Ascending aorta (tissue), 2 donors: ENCODE measurements at regions of chr17 and their contacts with region 1.

Region 1: DNA sequence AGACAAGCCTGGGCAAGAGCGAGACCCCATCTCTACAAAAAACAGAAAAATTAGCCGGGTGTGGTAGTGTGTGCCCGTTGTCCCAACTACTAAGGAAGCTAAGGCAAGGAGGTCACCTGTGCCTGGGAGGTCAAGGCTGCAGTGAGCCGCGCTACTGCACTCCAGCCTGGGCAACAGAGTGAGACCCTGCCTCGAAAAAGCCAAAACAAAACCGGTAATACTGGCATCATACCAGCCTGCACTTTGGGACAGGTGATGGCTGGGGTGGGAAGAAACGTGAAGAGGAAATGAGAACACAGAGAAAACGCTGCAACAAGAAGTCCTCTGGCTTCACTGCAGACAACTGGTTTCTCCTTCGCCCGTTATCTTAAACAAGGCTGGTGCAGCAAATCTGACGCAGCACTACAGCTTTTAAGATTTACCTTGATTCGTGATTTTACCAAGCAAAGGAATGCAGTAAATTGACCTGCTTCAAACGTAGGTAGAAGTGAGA is 725 bp upstream of the CASC3 start:
- DNase-seq: no peak
- H3K4me3 ChIP-seq: peak overlapping the region; percentile 82 to 97
- H3K27ac ChIP-seq: peak overlapping the region; percentile 91 to 99
- H3K4me1 ChIP-seq: peaks cover 14 to 15% of the 10 kb centered on the region in 2 donors
- H3K27me3 ChIP-seq: no peaks in the 10 kb centered on the region
- CTCF ChIP-seq: no peak

Region 2: DNA sequence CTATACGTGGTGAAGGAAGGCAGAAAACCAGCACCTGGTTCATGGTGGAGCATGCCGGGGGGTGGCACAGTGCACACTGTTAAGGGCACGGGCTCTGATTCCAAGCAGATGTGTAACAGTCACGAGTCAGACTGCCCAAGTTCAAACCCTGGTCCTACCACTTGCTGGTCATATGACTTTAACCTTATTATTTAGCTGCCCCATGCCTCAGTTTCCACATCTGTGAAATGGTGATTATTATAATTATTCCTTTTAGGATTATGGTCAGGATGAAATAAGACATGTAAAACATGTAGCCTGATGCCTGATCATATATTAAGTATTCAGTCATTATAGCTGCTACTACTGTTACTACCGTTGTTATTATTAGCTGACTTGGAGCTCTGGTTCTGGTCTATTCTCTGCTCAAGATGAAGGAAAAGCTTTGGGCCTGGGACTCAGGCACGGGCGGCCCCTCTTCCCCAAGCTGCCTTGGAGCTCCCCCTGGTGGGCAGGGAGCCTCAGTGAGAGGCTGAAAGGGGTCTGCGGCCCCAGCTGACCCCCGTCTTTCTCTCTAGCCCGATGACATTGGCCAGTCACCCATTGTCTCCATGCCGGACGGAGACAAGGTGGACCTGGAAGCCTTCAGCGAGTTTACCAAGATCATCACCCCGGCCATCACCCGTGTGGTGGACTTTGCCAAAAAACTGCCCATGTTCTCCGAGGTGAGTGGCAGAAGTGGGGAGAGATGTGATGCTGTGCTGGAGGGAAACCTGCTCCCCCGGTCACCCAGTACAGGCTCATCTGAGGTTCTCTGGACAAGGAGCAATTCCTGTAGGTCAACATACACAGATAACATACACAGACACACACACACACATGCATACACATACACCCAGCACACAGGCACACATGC is 53.2 kb before region 1 on chr17:
- intact Hi-C with region 1: no loop called
- DNase-seq: no peak
- H3K4me3 ChIP-seq: no peak overlapping the region
- H3K27ac ChIP-seq: peak overlapping the region; percentile 26 to 38
- H3K4me1 ChIP-seq: peaks cover 0 to 16% of the 10 kb centered on the region in 2 donors
- H3K27me3 ChIP-seq: no peaks in the 10 kb centered on the region
- CTCF ChIP-seq: peak; percentile 81 to 86 (median 82)

Region 3: GRCh38 chr17:40098846-40099618 is 40.6 kb before region 1 on chr17:
- intact Hi-C with region 1: loop called (anchors 1 kb)
- DNase-seq: peak; percentile 99 to 100
- H3K4me3 ChIP-seq: peak overlapping the region; percentile 89 to 94
- H3K27ac ChIP-seq: peak overlapping the region; percentile 91 to 99
- H3K4me1 ChIP-seq: peaks cover 35 to 70% of the 10 kb centered on the region in 2 donors
- H3K27me3 ChIP-seq: no peaks in the 10 kb centered on the region
- CTCF ChIP-seq: no peak

Region 4: GRCh38 chr17:40121181-40122135 is 18.2 kb before region 1 on chr17 and contains the start of gene MSL1:
- intact Hi-C with region 1: loop called (anchors 1 kb)
- DNase-seq: peak in 1 of 2 donors; percentile 93
- H3K4me3 ChIP-seq: peak within 1 kb of the TSS; percentile 83 to 88
- H3K27ac ChIP-seq: peak within 1 kb of the TSS; percentile 95 to 99
- H3K4me1 ChIP-seq: peaks cover 0 to 12% of the 10 kb centered on the region in 2 donors
- H3K27me3 ChIP-seq: no peaks in the 10 kb centered on the region
- CTCF ChIP-seq: no peak
- total RNA-seq, gene MSL1: 82.5 TPM

Region 5: DNA sequence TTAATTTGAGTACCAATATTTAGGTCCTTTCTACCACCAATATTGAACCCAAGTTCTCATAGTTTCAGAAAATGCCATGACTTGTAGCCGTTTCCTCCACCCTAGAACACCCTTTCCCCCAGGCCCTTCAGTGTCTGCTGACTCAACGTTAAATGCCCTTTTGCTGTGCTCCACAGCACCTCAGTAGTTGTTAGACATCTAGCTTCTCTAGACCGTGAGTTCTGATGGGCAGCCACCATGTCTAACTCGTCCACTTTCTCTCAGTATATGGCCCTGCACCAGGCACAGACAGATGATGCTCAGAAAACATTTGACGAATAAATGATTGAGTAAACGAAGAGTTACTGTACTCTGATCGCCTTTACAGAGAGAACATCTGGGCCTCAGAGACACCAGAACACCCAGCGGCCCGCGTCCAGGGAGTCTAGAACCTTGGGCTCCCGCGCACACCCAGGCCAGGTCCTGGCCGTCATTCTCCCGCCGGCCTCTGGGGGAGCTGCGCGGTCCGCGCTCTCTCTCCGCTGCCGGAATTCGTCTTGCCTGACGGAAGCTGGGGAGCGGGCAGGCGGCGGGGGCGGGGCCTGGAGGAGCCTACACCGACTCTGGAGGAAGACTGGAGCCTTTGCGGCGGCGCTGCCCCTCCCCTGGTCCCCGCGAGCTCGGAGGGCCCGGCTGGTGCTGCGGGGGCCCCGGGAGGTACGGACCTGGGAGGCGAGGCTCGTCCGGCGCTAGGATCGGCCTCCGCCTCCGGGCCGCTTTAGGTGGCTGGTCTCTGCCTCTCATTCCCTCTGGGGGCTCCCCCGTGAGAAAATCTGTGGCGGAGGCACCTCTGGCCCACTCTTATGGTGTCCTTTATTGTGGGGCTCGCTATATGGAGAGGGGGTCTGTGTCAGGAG is 1880.1 kb after region 1 on chr17 and contains the start of gene NKIRAS2:
- intact Hi-C with region 1: loop called (anchors 10 kb)
- DNase-seq: peak; percentile 78 to 96
- H3K4me3 ChIP-seq: peak within 1 kb of the TSS; percentile 84 to 91
- H3K27ac ChIP-seq: peak within 1 kb of the TSS; percentile 83 to 85
- H3K4me1 ChIP-seq: peaks cover 14 to 31% of the 10 kb centered on the region in 2 donors
- H3K27me3 ChIP-seq: no peaks in the 10 kb centered on the region
- CTCF ChIP-seq: peak; percentile 86 to 98 (median 96)
- total RNA-seq, gene NKIRAS2: 63.6 TPM